Calu3 (cell line): ENCODE measurements at regions of chr4 and their contacts with region 1.

Region 1: GRCh38 chr4:78951862-78952472 is 12.7 kb upstream of the PAQR3 start:
- DNase-seq: peak; percentile 23
- H3K4me3 Mint-ChIP-seq: no peak overlapping the region
- H3K27ac Mint-ChIP-seq: no peak overlapping the region
- H3K4me1 Mint-ChIP-seq: no peaks in the 10 kb centered on the region
- H3K27me3 Mint-ChIP-seq: no peaks in the 10 kb centered on the region
- CTCF ChIP-seq: no peak

Region 2: DNA sequence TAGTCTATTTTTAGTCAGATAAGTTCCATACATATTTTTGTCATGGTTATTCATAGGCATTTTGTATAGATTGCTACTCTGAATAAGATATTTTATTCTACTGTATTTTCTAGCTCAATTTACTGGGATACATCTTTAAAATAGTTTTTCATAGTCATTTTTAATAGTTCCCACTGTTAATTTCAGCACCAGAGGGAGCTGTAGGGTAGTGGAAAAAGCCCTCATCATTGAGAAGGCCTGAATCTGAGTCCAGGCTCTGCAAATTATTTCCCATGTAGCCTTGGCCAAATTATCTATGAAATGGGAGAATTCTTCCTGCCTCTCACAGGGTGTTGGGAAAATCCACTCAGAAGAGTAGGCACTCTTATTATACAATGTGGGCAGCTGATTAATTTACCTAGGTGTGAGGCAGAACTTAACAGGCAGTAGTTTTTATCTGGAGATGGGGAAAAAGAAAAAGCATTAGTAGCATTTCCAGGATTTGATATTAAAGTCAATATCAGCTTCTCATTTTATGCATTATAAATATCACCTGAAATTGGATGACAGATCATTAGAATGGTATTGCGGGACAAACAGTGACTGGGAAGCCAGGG is 90.2 kb after region 1 on chr4:
- CTCF ChIA-PET with region 1: no interaction called
- intact Hi-C with region 1: loop called (anchors 5 kb)
- DNase-seq: peak; percentile 9
- H3K4me3 Mint-ChIP-seq: no peak overlapping the region
- H3K27ac Mint-ChIP-seq: no peak overlapping the region
- H3K4me1 Mint-ChIP-seq: peaks cover 8% of the 10 kb centered on the region
- H3K27me3 Mint-ChIP-seq: no peaks in the 10 kb centered on the region
- CTCF ChIP-seq: peak; percentile 28

Region 3: GRCh38 chr4:79576429-79576753 is 624.4 kb after region 1 on chr4:
- CTCF ChIA-PET with region 1: no interaction called
- intact Hi-C with region 1: loop called (anchors 1 kb)
- DNase-seq: peak; percentile 14
- H3K4me3 Mint-ChIP-seq: no peak overlapping the region
- H3K27ac Mint-ChIP-seq: no peak overlapping the region
- H3K4me1 Mint-ChIP-seq: no peaks in the 10 kb centered on the region
- H3K27me3 Mint-ChIP-seq: no peaks in the 10 kb centered on the region
- CTCF ChIP-seq: peak; percentile 25

Region 4: DNA sequence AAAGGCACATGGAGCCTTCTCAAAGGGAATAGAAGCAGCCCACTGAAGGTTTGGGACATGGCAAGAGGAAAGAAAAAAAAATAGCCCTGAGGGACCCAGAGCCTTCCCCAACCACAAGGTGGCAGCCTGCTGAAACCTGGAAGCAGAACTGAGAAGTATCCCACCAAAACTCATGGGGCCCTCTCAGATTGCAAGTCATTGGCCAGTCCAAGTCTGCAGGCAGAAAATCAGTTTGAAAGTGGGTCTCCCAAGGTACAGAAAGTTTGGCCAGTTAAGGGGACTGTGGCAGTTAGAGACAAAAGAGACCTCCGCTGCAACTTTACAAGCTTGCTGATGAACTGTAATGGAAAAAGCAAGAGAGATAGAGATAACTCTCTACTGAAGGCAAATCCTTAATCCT is 965.3 kb after region 1 on chr4:
- CTCF ChIA-PET with region 1: no interaction called
- intact Hi-C with region 1: loop called (anchors 5 kb)
- DNase-seq: peak; percentile 54
- H3K4me3 Mint-ChIP-seq: no peak overlapping the region
- H3K27ac Mint-ChIP-seq: no peak overlapping the region
- H3K4me1 Mint-ChIP-seq: no peaks in the 10 kb centered on the region
- H3K27me3 Mint-ChIP-seq: no peaks in the 10 kb centered on the region
- CTCF ChIP-seq: peak; percentile 59

Region 5: DNA sequence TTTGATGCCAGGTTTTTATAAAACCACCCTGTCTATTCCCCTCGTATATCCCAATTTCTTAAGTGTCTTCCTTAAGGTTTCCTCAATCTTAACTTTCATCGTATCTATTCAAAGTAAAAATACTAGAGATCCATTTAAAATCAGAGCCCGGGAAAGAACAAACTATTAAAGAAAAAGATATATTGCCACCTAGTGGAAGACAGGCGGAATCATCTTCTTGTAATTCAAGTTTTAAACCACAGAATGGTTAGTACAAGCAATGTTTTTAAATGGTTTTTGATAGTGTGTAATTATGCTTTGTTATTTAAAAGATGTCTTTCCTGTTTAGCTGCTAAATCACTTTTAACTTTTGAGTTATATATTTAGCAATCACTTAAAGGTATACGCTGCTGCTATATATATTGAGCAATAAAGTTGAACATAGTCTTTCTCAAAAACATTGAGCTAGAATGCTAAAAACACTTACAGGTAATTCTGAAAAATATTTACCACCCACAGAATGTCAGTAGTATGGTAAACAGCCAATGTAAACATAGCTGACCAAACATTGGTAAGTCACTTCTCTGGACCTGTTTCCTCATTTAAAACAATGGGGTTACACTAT is 1263.6 kb after region 1 on chr4:
- CTCF ChIA-PET with region 1: no interaction called
- intact Hi-C with region 1: loop called (anchors 2 kb)
- DNase-seq: no peak
- H3K4me3 Mint-ChIP-seq: no peak overlapping the region
- H3K27ac Mint-ChIP-seq: no peak overlapping the region
- H3K4me1 Mint-ChIP-seq: peaks cover 8% of the 10 kb centered on the region
- H3K27me3 Mint-ChIP-seq: no peaks in the 10 kb centered on the region
- CTCF ChIP-seq: peak; percentile 15

Region 6: DNA sequence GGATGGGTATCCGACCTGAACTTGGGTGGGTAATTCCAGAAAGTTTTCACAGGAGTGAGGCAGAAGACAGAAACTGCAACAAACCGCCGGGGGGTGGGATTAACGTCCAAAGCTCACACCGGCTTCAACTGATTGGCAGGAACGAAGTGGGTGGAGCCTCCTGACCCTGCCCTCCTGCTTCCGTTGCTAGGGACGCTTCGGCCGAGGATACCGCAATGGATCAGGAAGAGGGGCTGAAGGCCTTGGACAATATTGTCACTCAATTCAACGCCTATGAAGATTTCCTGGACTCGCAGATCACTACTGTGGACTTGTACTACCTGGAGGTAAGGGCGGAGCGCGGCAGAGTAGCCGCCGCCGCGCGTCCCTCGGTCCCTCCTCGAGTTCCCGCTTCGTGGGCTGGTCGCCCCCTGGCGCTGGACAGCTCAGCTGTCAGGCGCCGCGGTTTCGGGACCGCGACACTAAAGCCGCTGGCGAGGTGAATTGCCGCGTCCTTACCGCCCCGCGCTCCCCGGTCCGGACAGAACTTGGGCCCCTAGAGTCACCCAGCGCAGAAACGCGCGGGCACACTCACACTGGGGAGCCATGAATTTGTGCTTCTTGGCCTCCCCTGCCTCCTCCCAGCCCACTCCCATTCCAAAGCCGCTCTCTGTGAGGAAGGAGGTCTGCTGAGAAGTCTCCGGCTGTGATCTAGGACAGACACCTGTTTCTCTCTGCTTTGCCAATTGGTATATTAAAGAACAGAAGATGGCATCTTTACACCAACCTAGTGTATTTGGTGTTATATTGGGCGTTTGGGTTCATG is 1383.8 kb after region 1 on chr4 and contains the start of gene CFAP299:
- CTCF ChIA-PET with region 1: interaction called, 5 read pairs
- intact Hi-C with region 1: loop called (anchors 10 kb)
- DNase-seq: peak; percentile 83
- H3K4me3 Mint-ChIP-seq: peak within 1 kb of the TSS; percentile 96
- H3K27ac Mint-ChIP-seq: no peak within 1 kb of the TSS
- H3K4me1 Mint-ChIP-seq: no peaks in the 10 kb centered on the region
- H3K27me3 Mint-ChIP-seq: no peaks in the 10 kb centered on the region
- CTCF ChIP-seq: peak; percentile 49
- total RNA-seq, gene CFAP299: not detected in 2 replicates